Astrocyte of the cerebellum (primary cell): ENCODE measurements at regions of chr2 and their contacts with region 1.

Region 1: DNA sequence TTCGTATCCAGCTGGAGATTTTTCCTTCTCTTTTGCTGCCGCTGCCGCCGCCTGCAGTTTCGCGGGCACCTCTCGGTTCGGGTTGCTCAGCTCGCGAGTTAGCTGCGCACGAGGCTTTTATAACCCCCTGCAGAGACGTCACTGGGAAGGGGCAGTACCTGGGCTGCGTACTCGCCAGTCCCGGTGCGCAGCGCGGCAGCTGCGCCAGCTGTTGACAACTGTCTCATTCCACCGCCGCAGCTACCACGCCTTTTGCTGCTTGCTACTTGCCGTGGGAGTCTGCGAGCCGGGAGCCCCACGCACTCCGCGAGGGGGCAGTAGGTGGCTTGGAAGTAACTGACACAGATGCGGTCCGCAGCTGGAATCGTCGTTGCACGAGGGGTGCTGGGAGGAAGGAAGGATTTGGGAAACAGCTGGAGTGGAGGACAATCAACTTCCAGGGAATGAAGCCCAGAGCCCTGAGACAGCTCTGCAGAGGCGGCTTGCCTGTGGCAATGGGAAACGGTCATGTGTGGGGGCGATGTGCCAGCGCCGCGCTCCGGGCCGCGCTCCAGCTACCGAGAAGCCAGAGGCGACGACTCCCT is at the start of gene TACR1:
- DNase-seq: peak; percentile 40
- H3K4me3 ChIP-seq: peak within 1 kb of the TSS; percentile 45
- CTCF ChIP-seq: peak; percentile 77

Region 2: DNA sequence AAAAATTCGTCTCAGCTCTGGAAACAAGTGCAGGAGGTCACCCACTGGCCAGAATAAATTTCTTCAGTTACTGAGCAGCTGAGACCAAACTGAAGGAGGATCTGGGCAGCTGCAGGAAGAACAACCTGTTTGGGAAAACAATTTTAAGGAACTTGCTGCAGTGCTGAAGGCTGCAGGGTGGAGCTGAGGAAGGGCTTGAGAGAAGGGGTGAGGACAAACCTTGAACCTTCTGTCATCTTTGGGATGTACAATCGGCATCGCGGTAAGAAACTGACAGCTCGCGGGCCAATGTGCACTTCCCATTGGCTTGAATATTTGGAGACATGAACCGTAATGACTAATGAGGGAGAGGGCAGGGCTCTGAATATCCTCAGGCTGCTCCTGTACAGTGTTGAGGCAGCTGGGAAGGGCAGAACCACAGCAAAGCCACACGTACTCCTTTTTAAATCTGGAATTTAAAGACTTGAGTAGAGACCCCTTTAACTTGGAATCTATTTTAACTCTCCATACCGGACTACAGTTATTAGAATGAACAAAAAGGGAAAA is 90.5 kb before region 1 on chr2:
- in situ Hi-C with region 1: no loop called
- DNase-seq: no peak
- H3K4me3 ChIP-seq: no peak overlapping the region
- CTCF ChIP-seq: no peak

Region 3: DNA sequence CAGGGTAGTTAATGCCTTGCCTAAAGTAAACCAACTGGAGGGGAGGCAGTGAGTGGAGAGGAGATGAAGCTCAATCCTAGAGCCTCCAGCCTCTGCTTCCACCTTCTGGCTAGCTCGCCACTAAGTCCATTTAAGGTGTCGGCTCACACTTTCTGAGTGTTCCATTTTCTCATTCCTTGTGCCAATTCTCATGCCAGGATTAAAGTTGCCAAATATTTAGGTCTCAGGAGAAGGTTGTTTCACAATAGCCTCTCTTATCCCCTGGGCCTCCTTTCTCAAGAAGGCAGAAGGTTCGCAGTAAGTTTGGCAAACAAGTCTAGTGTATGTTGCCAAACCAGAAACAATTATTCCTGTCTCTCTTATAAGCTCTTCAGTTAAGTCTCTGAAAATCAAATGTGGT is 57.4 kb before region 1 on chr2:
- in situ Hi-C with region 1: loop called (anchors 5 kb)
- DNase-seq: peak; percentile 18
- H3K4me3 ChIP-seq: no peak overlapping the region
- CTCF ChIP-seq: no peak

Region 4: GRCh38 chr2:75241696-75242095 is 42.2 kb after region 1 on chr2:
- in situ Hi-C with region 1: loop called (anchors 5 kb)
- DNase-seq: no peak
- H3K4me3 ChIP-seq: no peak overlapping the region
- CTCF ChIP-seq: peak; percentile 13